MCF 10A (cell line): ENCODE measurements at regions of chr5 and their contacts with region 1.

Region 1: DNA sequence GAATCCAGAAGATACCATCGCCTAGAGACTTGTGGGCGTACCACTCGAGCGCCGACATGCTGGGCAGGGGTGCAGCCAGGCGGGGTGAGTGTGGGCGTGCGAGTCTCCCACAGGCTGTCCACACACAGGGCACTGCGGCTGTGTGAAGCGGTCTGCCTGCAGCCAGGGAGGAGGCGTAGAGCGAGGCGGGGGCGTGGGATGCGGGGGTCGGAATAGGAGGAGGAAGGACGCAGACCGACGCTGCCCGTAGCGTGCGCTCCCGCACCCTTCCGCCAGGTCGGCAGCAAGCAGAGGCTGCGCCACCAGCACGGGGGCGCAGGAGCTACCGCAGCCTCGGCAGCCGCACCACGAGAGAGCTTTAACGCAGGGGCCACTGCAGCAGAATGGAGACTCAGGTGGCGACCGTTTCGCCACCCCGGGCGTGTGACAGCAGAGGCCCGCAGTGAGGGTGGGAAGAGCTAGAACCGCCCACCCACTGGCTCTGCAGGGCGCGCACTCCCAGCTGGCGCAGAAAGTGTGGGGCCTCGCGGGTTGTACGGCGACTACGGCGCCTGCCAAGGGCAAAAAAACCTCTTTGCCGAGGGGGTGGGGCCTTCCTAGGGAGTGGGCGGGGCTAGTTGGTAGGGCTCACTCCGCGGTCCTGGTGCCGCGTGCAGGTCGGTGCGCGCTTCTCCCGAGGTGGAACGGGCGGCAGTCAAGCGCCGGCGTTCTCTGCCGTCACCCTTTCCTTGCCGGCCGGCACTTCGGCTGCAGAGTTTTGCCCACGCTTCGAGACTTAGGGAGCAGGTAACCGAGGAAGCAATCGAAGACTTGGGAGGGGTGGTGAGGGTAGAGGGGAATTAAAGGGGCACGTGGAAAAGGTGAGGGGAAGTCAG is at the starts of genes MBLAC2 and POLR3G:
- DNase-seq: peak; percentile 93
- H3K4me3 Mint-ChIP-seq: peak within 1 kb of the TSS; percentile 100
- H3K27ac Mint-ChIP-seq: peak within 1 kb of the TSS; percentile 83
- H3K4me1 Mint-ChIP-seq: peaks cover 23% of the 10 kb centered on the region
- H3K27me3 Mint-ChIP-seq: no peaks in the 10 kb centered on the region
- CTCF ChIP-seq: peak; percentile 37
- total RNA-seq, gene MBLAC2: 9.1 and 9.4 TPM in 2 replicates
- total RNA-seq, gene POLR3G: 13.2 and 13.6 TPM in 2 replicates

Region 2: DNA sequence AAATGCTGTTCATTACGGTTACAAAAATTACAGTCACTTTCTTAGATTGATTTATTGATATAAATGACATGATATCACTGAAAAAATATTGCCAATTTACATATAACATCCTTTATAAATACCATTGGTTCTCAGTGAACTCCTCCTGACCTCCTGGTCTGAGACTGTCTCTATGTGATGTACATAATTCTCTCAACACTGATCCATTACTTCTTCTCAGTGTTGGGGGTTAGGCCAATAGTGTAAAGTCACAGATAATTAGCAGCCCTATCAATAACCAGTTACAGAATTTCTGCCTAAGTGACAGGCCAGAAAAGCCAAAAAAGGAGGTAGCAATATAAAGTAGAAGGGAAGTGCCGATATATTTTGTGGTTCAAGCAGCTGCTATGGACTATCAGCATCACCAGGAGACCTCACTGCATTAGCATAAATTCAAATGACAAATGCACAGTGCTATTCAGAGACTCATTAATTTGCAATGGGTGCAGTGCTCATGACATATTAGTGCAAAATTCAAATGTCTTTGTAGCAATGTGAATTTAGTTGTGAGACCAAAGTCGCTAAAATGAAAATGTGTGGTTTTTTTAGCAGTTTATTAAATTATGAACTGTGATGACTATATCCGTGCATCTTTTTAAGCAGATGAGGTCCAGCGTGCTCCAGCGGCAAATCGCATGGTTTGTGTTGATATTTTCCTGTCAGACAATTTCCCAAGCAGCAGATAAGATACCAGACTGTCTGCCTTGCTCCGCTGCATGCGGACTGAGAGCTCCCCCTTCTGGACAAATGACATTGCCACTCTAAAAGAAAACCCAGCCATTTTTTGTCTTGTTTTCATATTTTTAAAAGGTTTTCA is 209.6 kb before region 1 on chr5:
- CTCF ChIA-PET with region 1: no interaction called
- POLR2A ChIA-PET with region 1: no interaction called
- intact Hi-C with region 1: no loop called
- DNase-seq: peak; percentile 67
- H3K4me3 Mint-ChIP-seq: no peak overlapping the region
- H3K27ac Mint-ChIP-seq: no peak overlapping the region
- H3K4me1 Mint-ChIP-seq: no peaks in the 10 kb centered on the region
- H3K27me3 Mint-ChIP-seq: peaks cover 38% of the 10 kb centered on the region
- CTCF ChIP-seq: peak; percentile 85

Region 3: DNA sequence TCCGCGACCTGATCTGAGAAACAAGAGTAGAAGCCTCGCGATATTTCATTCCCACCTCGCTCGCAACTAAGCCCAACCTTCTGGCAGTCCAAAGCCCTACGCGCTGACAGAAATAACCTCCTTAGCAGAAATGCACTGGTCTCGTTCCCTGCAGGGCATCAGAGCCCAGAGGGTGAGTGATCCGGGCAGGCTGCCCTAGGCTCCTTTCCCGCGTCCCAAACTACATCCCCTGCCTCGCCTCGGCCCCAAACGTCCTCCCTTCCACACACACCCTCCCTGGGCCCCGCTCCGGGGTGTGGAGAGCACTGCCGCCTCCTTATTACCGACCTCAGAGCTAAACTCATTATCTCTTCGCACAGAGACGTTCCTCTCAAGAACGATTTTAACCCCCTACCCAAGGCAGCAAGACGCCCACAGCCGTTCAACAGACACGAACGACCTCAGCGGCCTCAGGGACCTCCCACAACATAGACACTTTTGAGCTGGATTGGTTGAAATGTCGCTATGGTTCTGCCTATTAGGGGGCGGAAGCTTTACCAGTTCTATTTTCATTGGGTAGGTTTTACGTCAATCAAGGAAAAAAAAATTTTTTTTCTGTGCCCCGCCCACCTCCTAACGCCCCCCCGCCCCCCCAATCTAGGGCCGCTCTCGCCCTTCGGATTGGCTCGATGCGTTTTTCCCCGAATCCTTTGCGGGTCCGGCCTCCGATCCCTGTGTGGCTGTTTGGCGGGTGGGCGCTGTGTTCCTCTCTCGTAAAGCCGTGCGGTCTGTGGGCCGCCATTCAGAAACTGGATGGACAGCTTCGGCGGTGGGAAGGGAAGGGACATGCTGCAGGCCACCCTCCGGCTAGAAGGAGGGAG is 64.9 kb before region 1 on chr5 and contains the start of gene CETN3:
- CTCF ChIA-PET with region 1: interaction called, 3 read pairs
- POLR2A ChIA-PET with region 1: interaction called, 68 read pairs
- intact Hi-C with region 1: loop called (anchors 2 kb)
- DNase-seq: peak; percentile 95
- H3K4me3 Mint-ChIP-seq: no peak within 1 kb of the TSS
- H3K27ac Mint-ChIP-seq: no peak within 1 kb of the TSS
- H3K4me1 Mint-ChIP-seq: peaks cover 22% of the 10 kb centered on the region
- H3K27me3 Mint-ChIP-seq: no peaks in the 10 kb centered on the region
- CTCF ChIP-seq: no peak
- total RNA-seq, gene CETN3: 24.8 and 28.4 TPM in 2 replicates

Region 4: GRCh38 chr5:90434116-90434714 is 40.3 kb before region 1 on chr5:
- CTCF ChIA-PET with region 1: interaction called, 17 read pairs
- POLR2A ChIA-PET with region 1: interaction called, 12 read pairs
- intact Hi-C with region 1: no loop called
- DNase-seq: peak; percentile 54
- H3K4me3 Mint-ChIP-seq: no peak overlapping the region
- H3K27ac Mint-ChIP-seq: no peak overlapping the region
- H3K4me1 Mint-ChIP-seq: no peaks in the 10 kb centered on the region
- H3K27me3 Mint-ChIP-seq: peaks cover 15% of the 10 kb centered on the region
- CTCF ChIP-seq: peak; percentile 41

Region 5: GRCh38 chr5:90461292-90461691 is 13.2 kb before region 1 on chr5:
- CTCF ChIA-PET with region 1: interaction called, 20 read pairs
- POLR2A ChIA-PET with region 1: interaction called, 61 read pairs
- intact Hi-C with region 1: no loop called
- DNase-seq: no peak
- H3K4me3 Mint-ChIP-seq: no peak overlapping the region
- H3K27ac Mint-ChIP-seq: peak overlapping the region; percentile 81
- H3K4me1 Mint-ChIP-seq: no peaks in the 10 kb centered on the region
- H3K27me3 Mint-ChIP-seq: no peaks in the 10 kb centered on the region
- CTCF ChIP-seq: no peak

Region 6: DNA sequence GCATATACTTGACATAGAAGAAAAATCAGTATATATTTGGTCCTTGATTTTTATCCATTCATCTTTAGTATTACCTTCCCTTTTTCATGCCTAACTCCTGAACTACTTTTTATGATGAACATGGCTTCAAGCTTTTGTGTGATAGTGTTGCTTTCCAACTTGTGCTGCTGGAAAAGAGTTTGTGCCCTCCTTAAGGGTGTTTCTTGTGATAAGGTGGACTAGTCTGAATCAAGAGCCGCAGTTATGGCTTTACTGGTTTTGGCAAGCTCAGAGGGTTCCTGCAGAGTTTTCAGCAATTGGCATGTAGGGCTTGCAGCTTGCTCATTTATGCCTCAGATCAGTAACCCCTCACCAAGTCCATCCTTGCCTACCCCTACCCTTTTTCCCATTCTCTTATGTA is 20.7 kb after region 1 on chr5:
- CTCF ChIA-PET with region 1: interaction called, 4 read pairs
- POLR2A ChIA-PET with region 1: interaction called, 13 read pairs
- intact Hi-C with region 1: no loop called
- DNase-seq: no peak
- H3K4me3 Mint-ChIP-seq: no peak overlapping the region
- H3K27ac Mint-ChIP-seq: no peak overlapping the region
- H3K4me1 Mint-ChIP-seq: no peaks in the 10 kb centered on the region
- H3K27me3 Mint-ChIP-seq: no peaks in the 10 kb centered on the region
- CTCF ChIP-seq: no peak

Region 7: GRCh38 chr5:90518661-90519060 is 44.2 kb after region 1 on chr5:
- CTCF ChIA-PET with region 1: no interaction called
- POLR2A ChIA-PET with region 1: interaction called, 11 read pairs
- intact Hi-C with region 1: no loop called
- DNase-seq: peak; percentile 7
- H3K4me3 Mint-ChIP-seq: no peak overlapping the region
- H3K27ac Mint-ChIP-seq: no peak overlapping the region
- H3K4me1 Mint-ChIP-seq: peaks cover 14% of the 10 kb centered on the region
- H3K27me3 Mint-ChIP-seq: no peaks in the 10 kb centered on the region
- CTCF ChIP-seq: no peak

Region 8: GRCh38 chr5:90529194-90529938 is 54.9 kb after region 1 on chr5 and contains the start of gene LYSMD3:
- CTCF ChIA-PET with region 1: interaction called, 25 read pairs
- POLR2A ChIA-PET with region 1: interaction called, 122 read pairs
- intact Hi-C with region 1: loop called (anchors 1 kb)
- DNase-seq: peak; percentile 96
- H3K4me3 Mint-ChIP-seq: peak within 1 kb of the TSS; percentile 95
- H3K27ac Mint-ChIP-seq: peak within 1 kb of the TSS; percentile 77
- H3K4me1 Mint-ChIP-seq: peaks cover 21% of the 10 kb centered on the region
- H3K27me3 Mint-ChIP-seq: peaks cover 33% of the 10 kb centered on the region
- CTCF ChIP-seq: no peak
- total RNA-seq, gene LYSMD3: 25.6 and 27.4 TPM in 2 replicates

Region 9: GRCh38 chr5:90571147-90571773 is 96.8 kb after region 1 on chr5:
- CTCF ChIA-PET with region 1: no interaction called
- POLR2A ChIA-PET with region 1: no interaction called
- intact Hi-C with region 1: no loop called
- DNase-seq: no peak
- H3K4me3 Mint-ChIP-seq: no peak overlapping the region
- H3K27ac Mint-ChIP-seq: no peak overlapping the region
- H3K4me1 Mint-ChIP-seq: no peaks in the 10 kb centered on the region
- H3K27me3 Mint-ChIP-seq: peaks cover 62% of the 10 kb centered on the region
- CTCF ChIP-seq: no peak

Region 10: DNA sequence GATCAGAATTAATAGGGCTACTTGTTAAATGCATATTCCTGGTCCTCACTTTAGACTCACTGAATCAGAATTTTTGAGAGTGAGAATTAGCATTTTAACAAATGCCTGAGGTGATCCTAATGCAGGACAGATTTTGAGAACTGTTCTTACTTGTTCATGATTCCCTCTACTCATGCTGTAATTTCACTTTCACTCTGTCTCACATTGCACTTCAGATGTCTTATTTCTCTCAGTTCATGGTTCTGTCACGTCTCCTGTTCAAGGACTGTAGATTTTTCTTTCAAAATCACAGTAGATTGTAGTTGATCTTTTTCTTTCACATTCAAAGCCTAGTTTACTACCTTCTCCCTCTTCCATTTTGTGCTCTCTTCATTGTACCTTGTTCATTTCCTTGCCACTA is 138.4 kb after region 1 on chr5:
- CTCF ChIA-PET with region 1: no interaction called
- POLR2A ChIA-PET with region 1: no interaction called
- intact Hi-C with region 1: no loop called
- DNase-seq: no peak
- H3K4me3 Mint-ChIP-seq: no peak overlapping the region
- H3K27ac Mint-ChIP-seq: no peak overlapping the region
- H3K4me1 Mint-ChIP-seq: no peaks in the 10 kb centered on the region
- H3K27me3 Mint-ChIP-seq: peaks cover 94% of the 10 kb centered on the region
- CTCF ChIP-seq: no peak